B cell (primary cell): ENCODE measurements at regions of chr5 and their contacts with region 1.

Region 1: DNA sequence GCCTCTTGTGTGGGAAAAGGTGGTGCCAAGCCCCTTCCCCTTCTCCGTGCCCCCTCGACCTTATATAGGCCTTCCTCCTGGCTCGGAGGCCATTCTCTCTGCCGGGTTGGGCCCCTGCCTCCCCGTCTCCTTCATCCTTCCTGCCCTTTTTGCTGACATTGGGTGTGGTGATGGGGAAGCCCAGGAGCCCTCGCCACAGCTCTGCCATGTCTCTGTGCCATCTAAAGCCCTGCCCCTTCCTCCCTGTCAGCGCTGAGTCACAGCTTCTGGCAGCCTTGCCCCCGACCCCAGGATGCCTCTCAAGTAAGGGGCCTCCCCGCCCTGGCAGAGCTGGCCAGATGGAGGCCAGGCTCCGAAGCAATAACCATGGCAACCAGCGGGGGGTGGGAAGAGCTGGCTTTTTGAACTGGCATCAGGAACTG is 30.4 kb downstream of the JADE2 start:
- DNase-seq: peak; percentile 83
- ATAC-seq: peak; percentile 64
- H3K4me3 ChIP-seq: peak overlapping the region in 1 of 5 experiments; percentile 32
- H3K4me3 Mint-ChIP-seq: peak overlapping the region; percentile 83
- H3K27ac ChIP-seq: peak overlapping the region; percentile 86 to 98
- H3K27ac Mint-ChIP-seq: peak overlapping the region; percentile 97
- H3K4me1 ChIP-seq: peaks cover 37 to 58% of the 10 kb centered on the region in 2 donors
- H3K4me1 Mint-ChIP-seq: peaks cover 62% of the 10 kb centered on the region
- H3K27me3 ChIP-seq: no peaks in the 10 kb centered on the region
- H3K27me3 Mint-ChIP-seq: no peaks in the 10 kb centered on the region
- CTCF ChIP-seq: no peak

Region 2: GRCh38 chr5:134365604-134366003 is 190.3 kb before region 1 on chr5:
- CTCF ChIA-PET with region 1: no interaction called
- POLR2A ChIA-PET with region 1: interaction called, 5 read pairs
- intact Hi-C with region 1: loop called (anchors 1 kb)
- DNase-seq: no peak
- ATAC-seq: no peak
- H3K4me3 ChIP-seq: no peak overlapping the region
- H3K4me3 Mint-ChIP-seq: peak overlapping the region; percentile 21
- H3K27ac ChIP-seq: no peak overlapping the region
- H3K27ac Mint-ChIP-seq: no peak overlapping the region
- H3K4me1 ChIP-seq: peaks cover 14 to 19% of the 10 kb centered on the region in 2 donors
- H3K4me1 Mint-ChIP-seq: peaks cover 18% of the 10 kb centered on the region
- H3K27me3 ChIP-seq: no peaks in the 10 kb centered on the region
- H3K27me3 Mint-ChIP-seq: no peaks in the 10 kb centered on the region
- CTCF ChIP-seq: no peak

Region 3: GRCh38 chr5:134533115-134533815 is 22.6 kb before region 1 on chr5:
- CTCF ChIA-PET with region 1: interaction called, 76 read pairs
- POLR2A ChIA-PET with region 1: interaction called, 65 read pairs
- intact Hi-C with region 1: no loop called
- DNase-seq: no peak
- ATAC-seq: no peak
- H3K4me3 ChIP-seq: no peak overlapping the region
- H3K4me3 Mint-ChIP-seq: no peak overlapping the region
- H3K27ac ChIP-seq: peak overlapping the region in 1 of 2 donors; percentile 54
- H3K27ac Mint-ChIP-seq: peak overlapping the region; percentile 68
- H3K4me1 ChIP-seq: peaks cover 57 to 82% of the 10 kb centered on the region in 2 donors
- H3K4me1 Mint-ChIP-seq: peaks cover 92% of the 10 kb centered on the region
- H3K27me3 ChIP-seq: no peaks in the 10 kb centered on the region
- H3K27me3 Mint-ChIP-seq: no peaks in the 10 kb centered on the region
- CTCF ChIP-seq: no peak